A549 (cell line): ENCODE measurements at regions of chrX and their contacts with region 1.

Region 1: GRCh38 chrX:37745354-37745753 is 34.5 kb upstream of the CYBB start:
- DNase-seq: peak; percentile 33 to 65
- ATAC-seq: peak; percentile 92 to 95
- H3K4me3 ChIP-seq: no peak overlapping the region
- H3K27ac ChIP-seq: no peak overlapping the region
- H3K4me1 ChIP-seq: no peaks in the 10 kb centered on the region
- CTCF ChIP-seq: peak; percentile 76
- EP300 ChIP-seq: no peak
- POLR2A ChIP-seq: no peak
- RAD21 ChIP-seq: peak; percentile 81 to 83

Region 2: DNA sequence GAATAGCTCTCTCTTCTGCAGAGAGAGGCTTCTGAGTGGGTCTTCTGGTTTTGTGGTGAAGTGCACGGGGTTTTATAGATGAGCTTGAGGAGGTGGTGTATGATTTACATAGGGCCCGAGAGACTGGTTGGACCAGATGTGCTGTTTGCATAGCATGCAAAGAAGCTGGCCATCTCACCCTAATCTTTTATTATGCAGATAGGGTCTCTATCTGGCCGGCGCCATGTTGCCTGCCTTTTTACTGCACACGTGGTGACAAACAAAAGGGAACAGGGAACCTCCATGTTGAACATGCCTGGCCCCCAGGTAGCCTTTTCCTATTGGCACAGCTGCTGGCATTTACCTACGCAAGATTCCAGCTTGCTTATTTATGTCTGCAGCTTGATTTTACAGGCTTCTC is 1210.5 kb before region 1 on chrX:
- CTCF ChIA-PET with region 1: no interaction called
- POLR2A ChIA-PET with region 1: no interaction called
- DNase-seq: no peak
- ATAC-seq: no peak
- H3K4me3 ChIP-seq: no peak overlapping the region
- H3K27ac ChIP-seq: no peak overlapping the region
- H3K4me1 ChIP-seq: no peaks in the 10 kb centered on the region
- CTCF ChIP-seq: no peak
- EP300 ChIP-seq: no peak
- POLR2A ChIP-seq: no peak
- RAD21 ChIP-seq: no peak

Region 3: GRCh38 chrX:37825209-37825842 is 80.0 kb after region 1 on chrX:
- CTCF ChIA-PET with region 1: interaction called, 42 read pairs
- POLR2A ChIA-PET with region 1: no interaction called
- DNase-seq: peak; percentile 10 to 38
- ATAC-seq: peak; percentile 56 to 81; a peak in 4 of 6 replicates
- H3K4me3 ChIP-seq: no peak overlapping the region
- H3K27ac ChIP-seq: no peak overlapping the region
- H3K4me1 ChIP-seq: peaks cover 6% of the 10 kb centered on the region; the same call in 2 of the 3 replicates
- CTCF ChIP-seq: peak; percentile 61
- EP300 ChIP-seq: no peak
- POLR2A ChIP-seq: no peak
- RAD21 ChIP-seq: peak; percentile 71 to 77

Region 4: GRCh38 chrX:37955273-37955672 is 209.9 kb after region 1 on chrX:
- CTCF ChIA-PET with region 1: no interaction called
- POLR2A ChIA-PET with region 1: no interaction called
- DNase-seq: no peak
- ATAC-seq: no peak
- H3K4me3 ChIP-seq: no peak overlapping the region
- H3K27ac ChIP-seq: no peak overlapping the region
- H3K4me1 ChIP-seq: no peaks in the 10 kb centered on the region
- CTCF ChIP-seq: no peak
- EP300 ChIP-seq: no peak
- POLR2A ChIP-seq: no peak
- RAD21 ChIP-seq: no peak

Region 5: GRCh38 chrX:38061335-38061734 is 316.0 kb after region 1 on chrX:
- CTCF ChIA-PET with region 1: no interaction called
- POLR2A ChIA-PET with region 1: no interaction called
- DNase-seq: peak in 1 of 2 experiments; percentile 2
- ATAC-seq: no peak
- H3K4me3 ChIP-seq: no peak overlapping the region
- H3K27ac ChIP-seq: no peak overlapping the region
- H3K4me1 ChIP-seq: no peaks in the 10 kb centered on the region
- CTCF ChIP-seq: no peak
- EP300 ChIP-seq: no peak
- POLR2A ChIP-seq: no peak
- RAD21 ChIP-seq: no peak

Region 6: GRCh38 chrX:38166478-38167083 is 421.2 kb after region 1 on chrX:
- CTCF ChIA-PET with region 1: interaction called, 36 read pairs
- POLR2A ChIA-PET with region 1: no interaction called
- DNase-seq: peak; percentile 4 to 18
- ATAC-seq: no peak
- H3K4me3 ChIP-seq: no peak overlapping the region
- H3K27ac ChIP-seq: no peak overlapping the region
- H3K4me1 ChIP-seq: no peaks in the 10 kb centered on the region
- CTCF ChIP-seq: peak; percentile 67
- EP300 ChIP-seq: no peak
- POLR2A ChIP-seq: no peak
- RAD21 ChIP-seq: peak; percentile 56 to 73

Region 7: DNA sequence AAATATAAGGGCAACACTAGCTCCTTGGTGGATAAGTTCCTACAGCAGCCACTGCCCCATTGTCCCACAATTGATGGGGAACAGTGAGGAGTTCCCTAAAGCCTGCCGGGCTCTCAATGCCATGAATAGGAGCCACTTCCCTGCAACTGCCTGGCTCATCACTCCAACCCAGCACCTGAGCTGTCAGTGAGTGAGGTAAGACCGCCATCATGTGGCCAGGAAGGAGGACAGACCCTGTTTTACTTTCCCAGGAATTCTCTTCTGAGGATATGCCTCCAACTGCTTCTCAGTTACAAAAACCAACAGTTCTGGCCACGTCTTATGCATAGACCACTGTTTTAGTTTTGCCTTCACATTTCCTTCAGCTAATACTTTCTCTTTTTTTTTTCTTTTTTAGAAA is 429.8 kb after region 1 on chrX:
- CTCF ChIA-PET with region 1: interaction called, 30 read pairs
- POLR2A ChIA-PET with region 1: no interaction called
- DNase-seq: peak; percentile 18 to 64
- ATAC-seq: peak; percentile 97
- H3K4me3 ChIP-seq: no peak overlapping the region
- H3K27ac ChIP-seq: no peak overlapping the region
- H3K4me1 ChIP-seq: no peaks in the 10 kb centered on the region
- CTCF ChIP-seq: peak; percentile 66
- EP300 ChIP-seq: no peak
- POLR2A ChIP-seq: no peak
- RAD21 ChIP-seq: peak; percentile 78 to 84